ENCODE measurements at regions of chr21 and their contacts with region 1.

Region 1: GRCh38 chr21:26842976-26843932 is 2.0 kb downstream of the ADAMTS1 start:
- DNase-seq: peak; percentile 93 to 96 (median 94)
- ATAC-seq: peak; percentile 60 to 68 (median 64)
- H3K4me3 ChIP-seq: peak overlapping the region; percentile 61 to 94 (median 84)
- H3K27ac ChIP-seq: peak overlapping the region; percentile 96 to 98 (median 98)
- H3K4me1 ChIP-seq: peaks cover 15 to 65% (median 46%) of the 10 kb centered on the region in 12 donors
- H3K27me3 ChIP-seq: peaks cover 0 to 38% (median 0%) of the 10 kb centered on the region in 9 donors
- CTCF ChIP-seq: peak in 11 of 12 donors; percentile 4 to 54 (median 30)
- POLR2A ChIP-seq: peak in 1 of 2 donors; percentile 23

Region 2: GRCh38 chr21:26782747-26783146 is 60.5 kb before region 1 on chr21:
- intact Hi-C with region 1: loop called in 1 of 10 experiments (anchors 1 kb)
- DNase-seq: no peak
- ATAC-seq: peak; percentile 33 to 64 (median 44)
- H3K4me3 ChIP-seq: no peak overlapping the region
- H3K27ac ChIP-seq: peak overlapping the region; percentile 10 to 79 (median 61)
- H3K4me1 ChIP-seq: peaks cover 0 to 39% (median 9%) of the 10 kb centered on the region in 12 donors
- H3K27me3 ChIP-seq: no peaks in the 10 kb centered on the region
- CTCF ChIP-seq: no peak
- POLR2A ChIP-seq: no peak

Region 3: GRCh38 chr21:27564684-27565301 is 721.5 kb after region 1 on chr21:
- intact Hi-C with region 1: loop called in 1 of 10 experiments (anchors 5 kb)
- DNase-seq: peak in 4 of 5 donors; percentile 30 to 40 (median 38)
- ATAC-seq: peak in 3 of 4 donors; percentile 71 to 76 (median 76)
- H3K4me3 ChIP-seq: no peak overlapping the region
- H3K27ac ChIP-seq: no peak overlapping the region
- H3K4me1 ChIP-seq: peaks cover 0 to 3% (median 0%) of the 10 kb centered on the region in 12 donors
- H3K27me3 ChIP-seq: no peaks in the 10 kb centered on the region
- CTCF ChIP-seq: peak; percentile 58 to 92 (median 76)
- POLR2A ChIP-seq: no peak

Region 4: DNA sequence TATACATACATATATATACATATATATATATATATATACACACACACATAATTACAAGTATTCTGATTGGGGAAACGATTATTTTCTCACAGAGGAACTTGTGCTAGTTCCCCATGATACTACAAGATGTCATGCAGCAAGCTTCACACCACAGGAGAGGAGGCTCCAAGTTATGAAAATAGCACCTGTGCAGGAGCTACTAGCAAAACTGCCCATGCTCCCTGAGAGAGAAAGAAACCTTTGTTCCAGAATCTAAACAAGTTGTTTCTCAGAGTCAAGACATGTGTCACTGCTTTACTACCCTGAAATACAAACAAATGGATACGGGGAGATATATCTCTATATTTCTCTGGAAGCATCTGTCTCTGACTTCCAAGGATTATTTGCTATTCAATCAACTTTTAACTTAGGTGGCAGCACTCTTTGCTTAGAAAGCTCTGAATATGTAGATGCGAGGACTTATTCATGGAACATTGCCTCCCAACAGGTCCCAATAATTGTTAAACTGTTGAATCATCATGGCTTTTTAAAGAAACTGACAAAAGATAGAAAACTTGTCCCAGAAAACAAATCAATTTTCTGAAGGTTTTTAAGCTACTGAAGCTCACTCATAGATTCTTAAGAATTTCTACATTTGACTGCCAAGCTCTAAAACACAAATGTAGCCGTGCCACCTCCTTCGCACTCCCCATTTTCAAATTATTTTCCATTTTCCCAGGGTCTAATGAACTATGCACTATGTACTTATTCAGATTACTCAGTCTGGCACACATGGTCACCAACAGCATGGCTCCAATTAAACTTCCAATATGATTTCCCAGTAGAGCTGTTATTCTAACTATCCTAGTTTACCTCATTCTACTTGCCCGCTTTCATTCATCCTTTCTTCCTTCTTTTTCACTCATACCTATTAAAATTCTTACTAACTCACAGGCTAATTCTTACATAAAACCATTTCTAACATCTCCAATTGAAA is 1220.3 kb after region 1 on chr21:
- intact Hi-C with region 1: loop called in 3 of 10 experiments (anchors 10 kb)
- DNase-seq: no peak
- ATAC-seq: no peak
- H3K4me3 ChIP-seq: no peak overlapping the region
- H3K27ac ChIP-seq: no peak overlapping the region
- H3K4me1 ChIP-seq: peaks cover 0 to 28% (median 8%) of the 10 kb centered on the region in 12 donors
- H3K27me3 ChIP-seq: no peaks in the 10 kb centered on the region
- CTCF ChIP-seq: no peak
- POLR2A ChIP-seq: no peak

Region 5: GRCh38 chr21:28522014-28522799 is 1679.0 kb after region 1 on chr21:
- intact Hi-C with region 1: loop called in 4 of 10 experiments (anchors 2 to 5 kb)
- DNase-seq: no peak
- ATAC-seq: peak; percentile 41 to 90 (median 72)
- H3K4me3 ChIP-seq: no peak overlapping the region
- H3K27ac ChIP-seq: peak overlapping the region; percentile 6 to 80 (median 56)
- H3K4me1 ChIP-seq: peaks cover 0 to 16% (median 11%) of the 10 kb centered on the region in 12 donors
- H3K27me3 ChIP-seq: no peaks in the 10 kb centered on the region
- CTCF ChIP-seq: peak in 9 of 12 donors; percentile 20 to 48 (median 31)
- POLR2A ChIP-seq: no peak

Region 6: GRCh38 chr21:28793043-28793442 is 1949.8 kb after region 1 on chr21:
- intact Hi-C with region 1: loop called in 1 of 10 experiments (anchors 5 kb)
- DNase-seq: no peak
- ATAC-seq: peak in 2 of 4 donors; percentile 59 to 72
- H3K4me3 ChIP-seq: no peak overlapping the region
- H3K27ac ChIP-seq: no peak overlapping the region
- H3K4me1 ChIP-seq: peaks cover 0 to 12% (median 5%) of the 10 kb centered on the region in 12 donors
- H3K27me3 ChIP-seq: no peaks in the 10 kb centered on the region
- CTCF ChIP-seq: peak in 10 of 12 donors; percentile 38 to 65 (median 54)
- POLR2A ChIP-seq: no peak

Measured in heart left ventricle (tissue), 16 donors.